GM12878 (cell line): ENCODE measurements at regions of chr7 and their contacts with region 1.

Region 1: GRCh38 chr7:105759670-105760550 is 116.5 kb downstream of the ATXN7L1 start:
- DNase-seq: no peak
- ATAC-seq: peak; percentile 60
- H3K4me3 ChIP-seq: no peak overlapping the region
- H3K27ac ChIP-seq: no peak overlapping the region
- H3K4me1 ChIP-seq: no peaks in the 10 kb centered on the region
- H3K27me3 ChIP-seq: peaks cover 0 to 3% of the 10 kb centered on the region in 2 experiments; a peak in 2 of 4 replicates
- CTCF ChIP-seq: peak; percentile 33 to 79 (median 42); a peak in 5 of 6 replicates
- EP300 ChIP-seq: no peak
- POLR2A ChIP-seq: no peak
- RAD21 ChIP-seq: peak; percentile 75

Region 2: DNA sequence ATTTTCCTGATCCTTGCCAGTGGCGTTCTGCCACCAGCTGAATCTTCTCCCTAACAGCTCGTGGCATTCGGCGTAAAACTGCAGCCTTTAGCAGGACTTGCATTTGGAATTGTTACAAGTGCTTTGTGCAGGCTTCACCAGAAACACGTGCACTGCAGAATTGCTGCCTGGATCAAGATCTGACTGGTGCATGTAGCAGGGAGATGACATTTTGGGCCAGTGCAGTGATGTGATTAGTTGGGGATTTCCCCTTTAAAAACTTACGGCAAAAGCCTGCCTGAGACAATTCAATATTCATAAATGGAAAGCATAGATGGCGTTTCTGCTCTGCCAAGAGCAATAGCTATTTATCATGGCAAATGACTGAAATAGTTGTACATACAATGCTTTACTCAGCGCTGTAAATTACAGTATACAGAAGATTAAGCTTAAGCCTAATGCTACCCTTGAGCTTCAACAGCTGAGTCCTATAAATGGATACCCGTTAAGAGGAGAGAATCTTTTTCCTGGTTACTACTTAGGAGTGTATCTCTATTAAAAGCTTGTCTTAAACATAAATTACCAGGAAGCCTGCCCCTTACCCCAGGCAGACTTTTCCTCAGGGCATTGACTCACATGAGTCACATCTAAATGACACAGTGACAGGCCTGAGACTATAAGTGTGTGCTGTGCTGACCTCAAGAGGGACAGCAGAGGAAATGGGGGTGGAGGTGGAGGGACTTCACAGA is 10.2 kb after region 1 on chr7:
- CTCF ChIA-PET with region 1: interaction called, 47 read pairs
- POLR2A ChIA-PET with region 1: no interaction called
- RAD21 ChIA-PET with region 1: interaction called, 11 read pairs
- SMC1A ChIA-PET with region 1: interaction called, 22 read pairs
- in situ Hi-C with region 1: no loop called
- intact Hi-C with region 1: no loop called
- DNase-seq: no peak
- ATAC-seq: peak; percentile 70
- H3K4me3 ChIP-seq: no peak overlapping the region
- H3K27ac ChIP-seq: no peak overlapping the region
- H3K4me1 ChIP-seq: peaks cover 22% of the 10 kb centered on the region
- H3K27me3 ChIP-seq: peaks cover 0 to 8% of the 10 kb centered on the region in 2 experiments; a peak in 2 of 4 replicates
- CTCF ChIP-seq: peak in 1 of 3 experiments; percentile 4; a peak in 1 of 6 replicates
- EP300 ChIP-seq: no peak
- POLR2A ChIP-seq: no peak
- RAD21 ChIP-seq: no peak

Region 3: GRCh38 chr7:105876091-105876963 is 116.4 kb after region 1 on chr7 and contains the start of gene ATXN7L1:
- CTCF ChIA-PET with region 1: interaction called, 20 read pairs
- POLR2A ChIA-PET with region 1: no interaction called
- RAD21 ChIA-PET with region 1: interaction called, 11 read pairs
- SMC1A ChIA-PET with region 1: interaction called, 13 read pairs
- in situ Hi-C with region 1: no loop called
- intact Hi-C with region 1: loop called (anchors 5 kb)
- DNase-seq: no peak
- ATAC-seq: peak; percentile 99
- H3K4me3 ChIP-seq: peak within 1 kb of the TSS; percentile 52
- H3K27ac ChIP-seq: no peak within 1 kb of the TSS
- H3K4me1 ChIP-seq: no peaks in the 10 kb centered on the region
- H3K27me3 ChIP-seq: peaks cover 9 to 13% of the 10 kb centered on the region in 2 experiments
- CTCF ChIP-seq: peak; percentile 6 to 57 (median 50); a peak in 3 of 6 replicates
- EP300 ChIP-seq: no peak
- POLR2A ChIP-seq: peak; percentile 25; the same call in 1 of the 2 replicates
- RAD21 ChIP-seq: 0 out of 2 replicates have a peak, but pooled peaks have one; percentile 10
- polyA plus RNA-seq, gene ATXN7L1: 0.40 to 0.72 TPM

Region 4: GRCh38 chr7:106015381-106016218 is 255.7 kb after region 1 on chr7:
- CTCF ChIA-PET with region 1: interaction called, 68 read pairs
- POLR2A ChIA-PET with region 1: no interaction called
- RAD21 ChIA-PET with region 1: interaction called, 19 read pairs
- SMC1A ChIA-PET with region 1: interaction called, 24 read pairs
- in situ Hi-C with region 1: loop called (anchors 10 kb)
- intact Hi-C with region 1: loop called (anchors 5 kb)
- DNase-seq: no peak
- ATAC-seq: no peak
- H3K4me3 ChIP-seq: no peak overlapping the region
- H3K27ac ChIP-seq: no peak overlapping the region
- H3K4me1 ChIP-seq: no peaks in the 10 kb centered on the region
- H3K27me3 ChIP-seq: no peaks in the 10 kb centered on the region; a peak in 1 of 4 replicates
- CTCF ChIP-seq: no peak
- EP300 ChIP-seq: no peak
- POLR2A ChIP-seq: no peak
- RAD21 ChIP-seq: no peak

Region 5: GRCh38 chr7:106041140-106041717 is 281.3 kb after region 1 on chr7:
- CTCF ChIA-PET with region 1: interaction called, 163 read pairs
- POLR2A ChIA-PET with region 1: no interaction called
- RAD21 ChIA-PET with region 1: interaction called, 43 read pairs
- SMC1A ChIA-PET with region 1: interaction called, 54 read pairs
- in situ Hi-C with region 1: no loop called
- intact Hi-C with region 1: loop called (anchors 2 kb)
- DNase-seq: no peak
- ATAC-seq: peak; percentile 82
- H3K4me3 ChIP-seq: no peak overlapping the region
- H3K27ac ChIP-seq: no peak overlapping the region
- H3K4me1 ChIP-seq: no peaks in the 10 kb centered on the region
- H3K27me3 ChIP-seq: peaks cover 0 to 6% of the 10 kb centered on the region in 2 experiments; a peak in 2 of 4 replicates
- CTCF ChIP-seq: peak; percentile 56 to 85 (median 82)
- EP300 ChIP-seq: no peak
- POLR2A ChIP-seq: no peak
- RAD21 ChIP-seq: peak; percentile 20; the same call in 1 of the 2 replicates